ENCODE measurements at regions of chr20 and their contacts with region 1.

Region 1: DNA sequence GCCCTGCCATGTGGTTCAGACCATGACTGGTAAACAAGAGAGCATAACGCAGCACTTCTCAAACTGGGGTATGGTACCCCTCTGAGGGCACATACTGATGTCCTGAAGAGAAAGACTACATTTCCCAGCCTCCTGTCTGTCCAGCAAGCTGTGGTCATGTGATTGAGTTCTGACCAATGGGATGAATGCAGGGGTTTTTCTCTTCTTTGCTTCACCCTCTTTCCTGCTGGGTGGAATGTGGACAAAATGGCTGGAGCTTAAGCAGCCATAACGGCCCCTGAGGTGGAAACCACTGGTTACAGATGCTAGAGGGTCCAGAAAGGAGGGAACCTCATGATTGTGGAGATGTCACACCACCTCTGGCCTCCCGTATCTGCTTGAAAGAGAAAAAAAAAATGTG is 19.4 kb upstream of the KCNB1 start:
- DNase-seq: no peak
- H3K4me3 ChIP-seq: no peak overlapping the region
- H3K27me3 ChIP-seq: peaks cover 6% of the 10 kb centered on the region
- CTCF ChIP-seq: no peak

Region 2: GRCh38 chr20:49338061-49338460 is 163.9 kb before region 1 on chr20:
- CTCF ChIA-PET with region 1: interaction called, 81 read pairs
- POLR2A ChIA-PET with region 1: no interaction called
- DNase-seq: no peak
- H3K4me3 ChIP-seq: no peak overlapping the region
- H3K27me3 ChIP-seq: peaks cover under 1% of the 10 kb centered on the region; the same call in 1 of the 2 replicates
- CTCF ChIP-seq: no peak

Measured in BJ (cell line).